Thyroid gland (tissue), 4 donors: ENCODE measurements at regions of chr17 and their contacts with region 1.

Region 1: GRCh38 chr17:16521070-16521727 is 29.2 kb upstream of the LRRC75A start:
- DNase-seq: peak; percentile 75 to 78
- H3K4me3 ChIP-seq: no peak overlapping the region
- H3K27ac ChIP-seq: no peak overlapping the region
- H3K4me1 ChIP-seq: peaks cover 9 to 22% of the 10 kb centered on the region in 2 donors
- H3K27me3 ChIP-seq: no peaks in the 10 kb centered on the region
- CTCF ChIP-seq: peak; percentile 64 to 96 (median 90)
- POLR2A ChIP-seq: no peak

Region 2: GRCh38 chr17:16363749-16364536 is 157.3 kb before region 1 on chr17:
- intact Hi-C with region 1: loop called (anchors 10 kb)
- DNase-seq: peak; percentile 75 to 76
- H3K4me3 ChIP-seq: no peak overlapping the region
- H3K27ac ChIP-seq: peak overlapping the region in 2 of 3 donors; percentile 27 to 43
- H3K4me1 ChIP-seq: peaks cover 5 to 9% of the 10 kb centered on the region in 2 donors
- H3K27me3 ChIP-seq: no peaks in the 10 kb centered on the region
- CTCF ChIP-seq: peak; percentile 81 to 93 (median 84)
- POLR2A ChIP-seq: no peak

Region 3: DNA sequence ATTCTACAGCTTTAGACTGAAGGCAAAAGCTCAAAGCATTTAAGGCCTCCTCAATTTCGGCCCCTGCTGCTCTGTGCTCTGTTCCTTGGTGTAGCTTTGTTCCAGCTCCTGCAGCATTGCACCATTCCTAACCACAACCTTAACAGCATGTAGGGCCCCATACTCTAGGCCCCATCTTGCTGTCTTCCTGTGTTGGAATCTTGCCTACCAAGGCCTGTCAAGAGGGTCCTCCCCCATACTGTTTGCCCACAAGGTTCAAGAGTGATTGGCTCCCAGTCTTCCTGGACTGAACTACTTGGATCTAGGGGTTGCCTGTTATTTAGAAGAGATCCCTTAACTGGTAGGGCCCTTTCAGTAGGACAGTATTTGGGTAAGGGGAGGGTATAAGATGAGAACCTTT is 79.1 kb before region 1 on chr17:
- intact Hi-C with region 1: no loop called
- DNase-seq: no peak
- H3K4me3 ChIP-seq: no peak overlapping the region
- H3K27ac ChIP-seq: peak overlapping the region in 1 of 3 donors; percentile 37
- H3K4me1 ChIP-seq: peaks cover 48 to 51% of the 10 kb centered on the region in 2 donors
- H3K27me3 ChIP-seq: no peaks in the 10 kb centered on the region
- CTCF ChIP-seq: no peak
- POLR2A ChIP-seq: no peak

Region 4: DNA sequence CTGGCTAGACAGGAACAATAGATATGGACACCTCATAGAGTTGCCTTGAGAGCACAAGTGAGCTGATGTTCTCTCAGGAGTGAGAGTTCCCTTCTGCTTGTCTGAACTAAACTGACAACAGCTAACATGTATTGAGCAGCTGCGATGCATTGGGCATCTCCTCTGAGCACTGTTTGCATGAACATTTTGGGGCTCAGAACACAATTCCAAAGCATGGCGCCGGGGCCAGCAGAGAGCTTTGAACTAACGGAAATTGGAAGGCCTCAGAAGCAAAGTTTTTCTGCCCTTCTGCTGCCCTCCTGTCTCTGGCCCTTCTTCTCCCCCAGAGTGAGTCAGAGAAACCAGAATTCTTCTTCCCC is 67.7 kb before region 1 on chr17:
- intact Hi-C with region 1: loop called (anchors 2 kb)
- DNase-seq: no peak
- H3K4me3 ChIP-seq: no peak overlapping the region
- H3K27ac ChIP-seq: no peak overlapping the region
- H3K4me1 ChIP-seq: no peaks in the 10 kb centered on the region
- H3K27me3 ChIP-seq: no peaks in the 10 kb centered on the region
- CTCF ChIP-seq: no peak
- POLR2A ChIP-seq: no peak